ENCODE measurements at regions of chr7 and their contacts with region 1.

Region 1: GRCh38 chr7:148884299-148885022 is 370 bp upstream of the EZH2 start:
- DNase-seq: peak; percentile 90 to 95 (median 91)
- H3K4me3 ChIP-seq: peak overlapping the region; percentile 9 to 95 (median 70)
- H3K27ac ChIP-seq: peak overlapping the region; percentile 81 to 95 (median 87)
- H3K4me1 ChIP-seq: no peaks in the 10 kb centered on the region
- H3K27me3 ChIP-seq: no peaks in the 10 kb centered on the region
- CTCF ChIP-seq: no peak
- POLR2A ChIP-seq: peak; percentile 62 to 82

Region 2: DNA sequence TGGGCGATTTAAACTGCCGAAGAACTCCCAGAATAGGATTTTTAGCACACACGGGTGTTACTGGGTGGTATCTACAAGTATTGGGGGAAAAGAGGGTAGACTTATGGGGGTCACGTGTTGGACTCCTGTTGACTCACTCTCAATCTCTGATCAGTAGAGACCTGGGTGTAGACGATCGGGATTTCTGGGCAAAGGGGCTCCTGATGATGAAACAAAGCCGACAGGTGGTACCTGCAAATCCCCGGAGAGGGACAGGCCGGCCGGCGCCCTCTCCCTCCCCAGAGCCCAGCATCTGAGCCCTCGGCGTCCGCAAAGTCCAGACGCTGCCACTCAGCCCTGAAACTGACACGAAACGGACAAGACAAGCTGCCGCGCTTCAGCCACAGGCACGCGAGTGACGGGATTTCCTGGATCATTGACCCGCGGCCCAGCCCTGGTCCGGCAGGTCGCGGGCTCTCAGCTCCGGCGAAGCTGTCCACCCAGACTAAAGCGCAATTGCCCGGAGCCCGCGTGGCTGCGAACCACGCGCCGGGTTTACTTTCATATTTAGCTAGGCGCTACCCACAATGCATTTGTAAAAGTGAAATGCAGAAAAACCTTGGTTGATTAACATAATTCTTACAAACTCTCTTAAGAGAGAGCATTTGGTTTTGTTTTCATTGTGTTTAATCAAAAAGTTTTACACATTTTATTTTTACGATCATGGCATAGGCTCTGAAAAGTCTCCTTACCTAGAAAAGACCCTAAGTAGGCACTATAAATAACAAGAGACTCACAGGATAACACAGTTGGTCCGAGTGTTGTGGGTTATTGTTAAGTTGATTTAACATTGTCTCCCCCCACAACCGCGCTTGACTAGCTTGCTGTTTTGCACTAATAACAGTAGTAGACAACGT is 56.5 kb after region 1 on chr7:
- intact Hi-C with region 1: loop called in 1 of 2 experiments (anchors 5 kb)
- DNase-seq: peak; percentile 73 to 92 (median 85)
- H3K4me3 ChIP-seq: peak overlapping the region; percentile 16 to 88 (median 58)
- H3K27ac ChIP-seq: peak overlapping the region; percentile 39 to 93 (median 83)
- H3K4me1 ChIP-seq: peaks cover 6 to 19% of the 10 kb centered on the region in 2 donors
- H3K27me3 ChIP-seq: no peaks in the 10 kb centered on the region
- CTCF ChIP-seq: no peak
- POLR2A ChIP-seq: peak; percentile 10 to 67

Region 3: DNA sequence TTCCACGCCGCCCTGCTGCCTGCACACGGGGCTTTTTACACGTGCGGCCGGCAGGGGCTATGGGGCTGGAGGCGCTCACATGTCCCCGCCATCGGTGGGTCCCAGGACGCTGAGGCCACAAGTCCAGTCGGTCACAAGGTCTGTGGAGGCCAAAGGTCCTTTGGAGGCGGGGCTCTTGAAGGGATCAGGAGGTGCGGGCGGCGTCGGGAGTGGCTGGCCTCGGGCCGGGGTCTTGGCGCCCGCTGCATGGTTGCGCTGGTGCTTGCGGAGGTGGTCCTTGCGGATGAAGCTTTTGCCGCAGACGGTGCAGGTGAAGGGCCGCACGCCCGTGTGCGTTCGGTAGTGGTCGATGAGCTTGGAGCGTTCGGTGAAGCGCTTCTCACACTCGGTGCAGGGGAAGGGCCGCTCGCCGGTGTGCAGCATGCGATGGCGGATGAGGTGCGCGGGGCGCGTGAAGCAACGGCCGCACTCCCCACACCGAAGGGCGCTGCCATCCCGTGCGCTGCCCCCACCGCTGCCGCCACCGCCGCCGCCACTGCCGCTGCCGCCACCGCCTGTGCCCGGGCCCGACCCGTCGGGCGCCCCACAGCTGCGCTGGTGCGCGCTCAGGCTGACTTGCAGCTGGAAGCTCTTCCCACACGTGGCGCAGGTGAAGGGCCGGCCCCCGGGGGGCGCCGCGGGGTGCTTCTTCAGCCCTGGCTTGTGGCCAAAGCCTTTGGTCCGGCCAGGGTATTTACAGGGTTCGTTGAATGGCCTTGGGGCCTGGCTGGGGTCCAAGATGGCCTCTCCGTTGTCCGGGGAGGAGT is 590.1 kb after region 1 on chr7:
- intact Hi-C with region 1: no loop called
- DNase-seq: no peak
- H3K4me3 ChIP-seq: no peak overlapping the region
- H3K27ac ChIP-seq: no peak overlapping the region
- H3K4me1 ChIP-seq: no peaks in the 10 kb centered on the region
- H3K27me3 ChIP-seq: no peaks in the 10 kb centered on the region
- CTCF ChIP-seq: no peak
- POLR2A ChIP-seq: no peak